ENCODE measurements at regions of chr7 and their contacts with region 1.

Region 1: DNA sequence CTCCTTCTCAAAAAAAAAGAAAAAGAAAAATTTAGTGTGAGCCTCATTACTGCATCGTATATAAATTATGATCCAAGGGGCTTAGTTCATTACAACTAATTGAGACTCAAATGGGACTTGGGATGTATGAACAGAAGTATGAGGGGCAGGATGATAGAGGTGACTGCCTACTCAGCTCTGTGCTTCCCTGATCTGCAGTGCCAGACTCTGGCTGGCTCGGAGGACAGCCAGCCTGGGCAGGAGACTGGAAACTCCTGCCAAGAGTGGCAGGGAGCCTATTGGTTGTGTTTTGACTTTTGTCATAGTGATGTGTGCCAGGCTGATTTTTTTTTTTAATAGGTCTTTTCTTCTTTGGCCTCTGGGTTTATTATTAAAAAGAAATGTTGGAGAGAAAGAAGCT is 73.8 kb upstream of the GTF2IRD1 start:
- DNase-seq: no peak
- ATAC-seq: no peak
- H3K4me3 ChIP-seq: no peak overlapping the region
- H3K27ac ChIP-seq: no peak overlapping the region
- H3K4me1 ChIP-seq: no peaks in the 10 kb centered on the region
- H3K27me3 ChIP-seq: no peaks in the 10 kb centered on the region
- CTCF ChIP-seq: no peak
- POLR2A ChIP-seq: no peak

Region 2: DNA sequence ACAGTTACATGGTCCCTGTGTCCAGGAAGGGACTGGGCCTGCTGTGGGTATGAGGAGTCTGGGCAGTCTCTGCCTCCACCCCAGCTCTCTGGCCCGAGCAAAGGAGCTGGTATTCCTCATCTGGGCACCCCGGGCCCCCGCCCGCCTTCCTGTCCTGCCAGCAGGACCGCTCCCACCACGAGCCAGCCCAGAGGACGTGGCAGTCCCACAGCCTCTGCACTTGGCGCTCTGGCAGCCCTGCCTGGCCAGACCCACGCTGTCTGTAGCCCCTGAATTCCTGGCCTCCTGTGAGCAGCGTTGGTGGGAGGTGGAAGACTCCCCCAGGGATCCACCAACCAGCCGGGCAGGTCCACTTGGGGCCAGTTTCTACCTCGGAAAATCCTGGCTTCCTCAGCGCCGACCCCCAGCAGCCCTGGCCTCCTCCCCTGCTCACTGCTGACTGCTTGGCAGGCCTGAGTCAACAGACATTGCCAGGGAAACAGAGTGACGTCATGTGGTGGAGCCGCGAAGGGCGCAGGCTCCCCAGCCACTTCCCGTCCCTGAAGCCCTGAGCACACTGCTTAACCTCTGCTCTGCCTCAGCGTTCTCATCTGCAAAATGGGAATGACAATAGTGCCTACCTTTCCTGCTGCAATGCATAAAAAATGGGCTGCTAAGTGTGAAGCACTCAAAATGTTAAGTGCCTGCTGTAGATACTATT is 317.9 kb before region 1 on chr7:
- in situ Hi-C with region 1: loop called in 1 of 4 experiments (anchors 25 kb)
- intact Hi-C with region 1: no loop called
- DNase-seq: peak in 1 of 2 donors; percentile 54
- ATAC-seq: peak; percentile 52 to 65
- H3K4me3 ChIP-seq: no peak overlapping the region
- H3K27ac ChIP-seq: peak overlapping the region; percentile 38 to 52 (median 46)
- H3K4me1 ChIP-seq: peaks cover 3 to 18% of the 10 kb centered on the region in 2 donors
- H3K27me3 ChIP-seq: no peaks in the 10 kb centered on the region
- CTCF ChIP-seq: no peak
- POLR2A ChIP-seq: peak in 1 of 2 donors; percentile 11

Region 3: GRCh38 chr7:74606101-74606908 is 226.4 kb after region 1 on chr7:
- in situ Hi-C with region 1: no loop called
- intact Hi-C with region 1: no loop called
- DNase-seq: peak; percentile 24 to 70
- ATAC-seq: peak; percentile 24 to 52
- H3K4me3 ChIP-seq: peak overlapping the region; percentile 45 to 60 (median 52)
- H3K27ac ChIP-seq: peak overlapping the region; percentile 70 to 88 (median 82)
- H3K4me1 ChIP-seq: peaks cover 14 to 16% of the 10 kb centered on the region in 2 donors
- H3K27me3 ChIP-seq: no peaks in the 10 kb centered on the region
- CTCF ChIP-seq: peak in 1 of 5 experiments; percentile 20
- POLR2A ChIP-seq: no peak